WTC11 (cell line): ENCODE measurements at regions of chr4 and their contacts with region 1.

Region 1: GRCh38 chr4:2843263-2843940 is at the start of gene ADD1:
- DNase-seq: peak; percentile 95
- ATAC-seq: peak; percentile 86
- H3K4me3 Mint-ChIP-seq: peak within 1 kb of the TSS; percentile 91
- H3K27ac Mint-ChIP-seq: peak within 1 kb of the TSS; percentile 85
- H3K4me1 Mint-ChIP-seq: peaks cover 32% of the 10 kb centered on the region
- H3K27me3 Mint-ChIP-seq: no peaks in the 10 kb centered on the region; the same call in 1 of the 2 replicates
- CTCF ChIP-seq: no peak
- total RNA-seq, gene ADD1: 164 to 178 TPM (median 167 TPM) in 3 replicates

Region 2: GRCh38 chr4:2785613-2786012 is 57.8 kb before region 1 on chr4:
- CTCF ChIA-PET with region 1: no interaction called
- POLR2A ChIA-PET with region 1: interaction called, 14 read pairs
- DNase-seq: no peak
- ATAC-seq: no peak; the same call in 1 of the 2 replicates
- H3K4me3 Mint-ChIP-seq: no peak overlapping the region
- H3K27ac Mint-ChIP-seq: no peak overlapping the region
- H3K4me1 Mint-ChIP-seq: peaks cover 25% of the 10 kb centered on the region
- H3K27me3 Mint-ChIP-seq: peaks cover 4% of the 10 kb centered on the region; the same call in 1 of the 2 replicates
- CTCF ChIP-seq: no peak

Region 3: DNA sequence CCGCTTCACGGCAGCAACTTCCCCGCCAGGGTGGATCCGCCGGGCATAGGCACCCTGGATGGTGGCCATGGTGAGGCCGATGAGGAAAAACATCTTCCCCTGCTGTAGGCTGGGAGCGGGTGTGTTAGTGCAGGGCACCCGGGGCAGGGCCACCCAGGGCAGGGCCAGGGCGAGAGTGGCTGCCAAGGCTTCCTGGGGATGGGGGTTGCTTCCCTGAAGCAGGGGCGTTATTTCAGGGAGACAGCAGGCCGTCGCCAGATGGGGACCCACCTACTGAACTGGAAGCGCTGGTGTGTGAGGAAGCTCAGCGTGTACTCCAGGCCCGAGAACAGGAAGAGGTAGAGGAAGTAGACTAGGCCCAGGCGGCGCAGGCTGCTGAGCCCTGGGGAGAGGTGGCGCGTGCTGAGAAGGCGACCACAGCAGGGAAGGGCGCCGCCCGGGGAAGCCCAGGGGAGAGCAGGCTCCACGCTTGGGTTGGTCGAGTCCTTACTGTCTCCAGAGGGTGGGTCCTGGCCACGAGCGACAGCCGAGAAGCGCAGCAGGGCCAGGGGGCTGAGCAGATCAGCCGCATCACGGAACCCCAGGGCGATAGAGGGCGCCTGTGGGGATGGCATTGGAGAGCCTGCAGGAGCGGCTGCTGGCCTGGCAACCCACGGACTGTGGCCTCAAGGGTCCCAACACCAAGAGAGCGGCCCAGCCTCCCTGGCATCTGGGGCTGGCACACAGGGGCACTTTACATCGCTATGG is 88.3 kb after region 1 on chr4:
- CTCF ChIA-PET with region 1: no interaction called
- POLR2A ChIA-PET with region 1: no interaction called
- DNase-seq: peak; percentile 64
- ATAC-seq: peak; percentile 8
- H3K4me3 Mint-ChIP-seq: no peak overlapping the region
- H3K27ac Mint-ChIP-seq: no peak overlapping the region; the same call in 1 of the 2 replicates
- H3K4me1 Mint-ChIP-seq: peaks cover 19% of the 10 kb centered on the region
- H3K27me3 Mint-ChIP-seq: no peaks in the 10 kb centered on the region
- CTCF ChIP-seq: no peak

Region 4: DNA sequence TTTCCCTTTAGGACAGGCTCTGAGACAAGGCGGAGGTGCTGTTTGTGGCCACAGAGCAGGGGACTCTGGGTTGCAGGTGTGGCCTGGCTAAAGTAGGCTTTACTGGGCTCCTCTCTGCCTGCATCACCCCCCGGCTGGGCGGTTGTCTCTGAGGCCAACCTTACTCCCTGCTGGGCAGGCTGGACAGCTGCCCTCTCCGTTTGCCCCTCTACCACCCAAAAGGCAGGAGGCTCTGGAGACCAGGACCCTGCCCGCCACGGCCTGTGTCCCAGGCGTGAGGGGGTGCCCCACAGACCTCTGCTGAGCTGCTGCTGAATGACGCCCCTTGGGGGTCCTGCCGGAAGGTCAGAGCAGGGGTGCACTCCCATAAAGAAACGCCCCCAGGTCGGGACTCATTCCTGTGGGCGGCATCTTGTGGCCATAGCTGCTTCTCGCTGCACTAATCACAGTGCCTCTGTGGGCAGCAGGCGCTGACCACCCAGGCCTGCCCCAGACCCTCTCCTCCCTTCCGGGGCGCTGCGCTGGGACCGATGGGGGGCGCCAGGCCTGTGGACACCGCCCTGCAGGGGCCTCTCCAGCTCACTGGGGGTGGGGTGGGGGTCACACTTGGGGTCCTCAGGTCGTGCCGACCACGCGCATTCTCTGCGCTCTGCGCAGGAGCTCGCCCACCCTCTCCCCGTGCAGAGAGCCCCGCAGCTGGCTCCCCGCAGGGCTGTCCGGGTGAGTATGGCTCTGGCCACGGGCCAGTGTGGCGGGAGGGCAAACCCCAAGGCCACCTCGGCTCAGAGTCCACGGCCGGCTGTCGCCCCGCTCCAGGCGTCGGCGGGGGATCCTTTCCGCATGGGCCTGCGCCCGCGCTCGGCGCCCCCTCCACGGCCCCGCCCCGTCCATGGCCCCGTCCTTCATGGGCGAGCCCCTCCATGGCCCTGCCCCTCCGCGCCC is 230.0 kb after region 1 on chr4:
- CTCF ChIA-PET with region 1: no interaction called
- POLR2A ChIA-PET with region 1: no interaction called
- DNase-seq: peak; percentile 27
- ATAC-seq: peak; percentile 65
- H3K4me3 Mint-ChIP-seq: peak overlapping the region; percentile 46
- H3K27ac Mint-ChIP-seq: no peak overlapping the region
- H3K4me1 Mint-ChIP-seq: peaks cover 17% of the 10 kb centered on the region
- H3K27me3 Mint-ChIP-seq: no peaks in the 10 kb centered on the region; the same call in 1 of the 2 replicates
- CTCF ChIP-seq: no peak